Right ventricle myocardium inferior (tissue), 1 donor: ENCODE measurements at regions of chr22 and their contacts with region 1.

Region 1: DNA sequence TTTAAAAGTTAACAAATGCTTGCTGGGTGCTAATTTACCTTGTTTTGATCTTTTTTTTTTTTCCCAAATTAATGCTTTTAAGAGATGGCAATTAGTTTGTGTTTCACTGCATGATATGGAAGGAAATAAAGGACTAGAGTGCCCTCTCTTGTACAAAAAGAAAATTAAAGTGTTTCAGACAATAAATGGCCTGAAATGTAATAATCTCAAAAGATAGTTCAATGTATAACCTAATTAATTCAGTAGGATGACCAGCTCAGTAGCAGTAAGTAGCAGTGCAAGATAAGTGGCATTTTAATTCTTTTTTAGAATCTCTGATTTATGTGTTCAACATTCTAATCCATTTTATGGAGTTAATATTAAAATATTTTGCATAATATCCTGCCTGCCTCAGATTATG is 39.9 kb upstream of the MYO18B start:
- DNase-seq: no peak
- ATAC-seq: no peak

Region 2: GRCh38 chr22:25465949-25466348 is 236.1 kb before region 1 on chr22:
- intact Hi-C with region 1: loop called (anchors 1 kb)
- DNase-seq: no peak
- ATAC-seq: no peak

Region 3: DNA sequence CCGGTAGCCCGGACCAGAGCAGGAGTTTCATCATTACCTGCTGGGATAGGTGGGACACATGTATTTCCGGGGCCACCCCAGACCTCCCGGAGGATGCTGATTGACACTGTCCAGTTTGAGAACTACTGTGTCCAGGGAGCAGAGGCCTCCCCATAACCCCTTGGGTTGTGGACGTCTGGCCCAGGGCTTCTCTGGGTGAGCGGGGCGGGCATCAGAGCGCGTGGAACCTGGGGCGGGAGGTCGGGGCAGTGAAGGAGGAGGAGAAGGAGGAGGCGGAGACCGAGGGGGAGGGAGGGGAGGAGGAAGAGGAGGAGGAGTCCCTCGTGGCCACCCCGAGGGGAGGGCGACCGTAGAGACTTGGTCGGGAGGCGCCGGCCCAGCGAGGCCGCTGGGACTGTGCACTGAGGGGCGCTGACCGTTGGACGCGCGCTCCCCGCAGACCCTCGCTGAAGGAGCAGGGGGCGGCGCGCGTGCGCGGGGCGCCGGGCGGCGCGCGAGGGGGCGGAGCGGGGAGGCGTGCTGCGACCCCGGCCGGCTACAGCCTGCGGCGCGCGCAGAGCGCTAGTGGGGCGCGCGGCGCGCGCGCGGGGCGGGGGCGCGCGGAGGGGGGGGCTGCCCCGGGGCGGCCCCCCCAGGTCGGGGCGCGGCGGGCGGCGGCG is 137.6 kb before region 1 on chr22 and contains the start of gene GRK3:
- intact Hi-C with region 1: loop called (anchors 5 kb)
- DNase-seq: peak; percentile 87
- ATAC-seq: peak; percentile 80
- total RNA-seq, gene GRK3: 4.0 TPM

Region 4: GRCh38 chr22:25777870-25778269 is 75.8 kb after region 1 on chr22:
- intact Hi-C with region 1: loop called (anchors 5 kb)
- DNase-seq: no peak
- ATAC-seq: no peak